Cardiac septum (tissue), 1 donor: ENCODE measurements at regions of chr3 and their contacts with region 1.

Region 1: DNA sequence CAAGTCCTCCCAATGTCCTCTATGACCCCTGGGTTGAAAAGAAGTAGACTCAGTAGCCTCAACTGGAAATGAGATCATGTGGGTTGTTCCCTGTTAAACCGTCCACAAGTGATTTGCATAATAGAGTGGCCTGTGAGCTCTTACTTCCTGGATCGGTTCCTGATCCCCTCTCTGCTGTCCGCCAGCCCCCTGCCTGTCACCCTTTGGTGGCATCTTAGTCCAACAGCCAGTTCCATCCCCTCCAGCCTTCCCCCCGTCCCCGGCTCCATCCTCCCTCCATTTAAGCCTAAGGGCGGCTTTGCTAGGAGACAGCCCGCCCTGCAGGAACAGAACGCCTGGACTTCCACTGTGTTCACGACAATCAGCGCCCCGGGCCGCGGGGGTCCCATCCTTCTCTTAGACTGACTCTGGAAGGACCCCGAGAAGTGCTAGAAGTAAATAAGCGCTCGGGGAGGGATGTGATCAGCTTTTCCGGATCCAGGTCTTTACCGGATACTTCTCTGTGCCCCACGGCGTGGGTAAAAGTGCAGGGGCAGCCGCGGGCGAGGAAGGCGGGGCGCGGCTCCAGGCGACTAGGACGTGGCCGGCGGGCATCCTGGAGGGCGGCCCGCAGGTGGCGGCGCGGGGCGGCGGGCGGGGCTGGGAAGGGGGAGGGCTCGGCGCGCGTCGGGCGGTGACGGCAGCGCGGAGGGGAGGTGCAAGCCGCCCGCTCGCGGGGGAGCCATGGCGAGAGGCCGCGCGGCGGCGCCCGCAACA is 51.2 kb upstream of the ULK4 start:
- DNase-seq: peak; percentile 93

Region 2: DNA sequence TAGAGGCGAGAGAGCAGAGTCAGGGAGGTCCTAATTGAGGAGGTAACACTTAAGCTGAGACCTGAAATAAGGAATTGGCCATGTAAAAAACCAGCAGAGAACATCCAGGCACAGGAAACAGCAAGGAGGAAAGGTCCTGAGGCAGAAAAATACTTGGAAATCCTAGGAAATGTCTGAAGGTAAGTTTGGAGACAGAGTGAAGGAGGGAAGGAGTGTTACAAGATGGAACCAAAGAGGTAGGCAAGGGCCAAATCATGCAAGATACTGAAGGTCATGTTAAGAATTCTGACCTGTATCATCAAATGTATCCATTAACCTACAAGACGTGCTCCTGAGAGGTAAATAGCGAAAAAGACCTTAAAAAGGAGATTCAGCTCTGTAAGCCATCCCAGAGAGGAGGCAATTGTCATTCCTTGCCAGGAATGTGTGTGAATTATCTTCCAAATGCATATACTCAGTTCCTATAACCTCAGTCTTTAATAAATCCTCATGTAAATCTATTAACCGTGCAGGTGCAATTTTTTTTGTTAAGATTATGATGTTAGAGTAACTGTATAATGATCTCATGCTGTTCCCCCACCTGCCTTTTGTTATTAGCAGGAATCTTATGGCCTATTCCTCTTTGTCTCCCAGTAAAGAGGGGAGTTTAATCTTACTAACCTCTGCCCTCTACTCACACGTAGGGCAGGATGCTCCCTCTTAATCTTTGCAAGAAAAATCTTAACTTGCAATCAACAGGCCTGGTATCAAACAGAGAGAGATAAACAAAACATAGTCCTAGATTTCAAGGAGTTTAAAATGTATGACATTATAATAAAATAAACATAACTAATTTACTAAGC is 218.1 kb before region 1 on chr3:
- intact Hi-C with region 1: no loop called
- DNase-seq: no peak

Region 3: DNA sequence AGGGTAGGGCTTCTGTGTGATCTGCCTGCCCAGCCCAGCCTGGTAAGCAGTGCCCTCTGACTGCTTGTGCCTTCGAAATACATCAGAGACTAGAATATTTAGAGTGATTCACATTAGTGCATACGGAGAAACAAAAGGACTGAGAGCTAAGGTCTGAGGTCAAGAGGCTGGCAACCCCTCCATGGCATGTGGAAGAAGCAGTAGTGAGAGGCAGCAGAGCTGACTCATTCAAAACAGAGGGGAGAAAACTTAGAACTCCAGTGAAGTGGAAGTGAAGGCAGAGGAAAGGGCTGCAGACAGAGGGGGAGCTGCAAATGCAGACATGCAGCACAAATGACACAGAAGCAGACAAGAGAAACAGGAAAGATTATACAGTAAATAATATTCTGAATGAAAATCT is 112.8 kb before region 1 on chr3:
- intact Hi-C with region 1: loop called (anchors 5 kb)
- DNase-seq: no peak

Region 4: GRCh38 chr3:41961750-41962679 is 51.1 kb before region 1 on chr3 and contains the start of gene ULK4:
- intact Hi-C with region 1: loop called (anchors 1 kb)
- DNase-seq: peak; percentile 99
- total RNA-seq, gene ULK4: 5.1 TPM

Region 5: GRCh38 chr3:42061713-42062408 is 48.7 kb after region 1 on chr3:
- intact Hi-C with region 1: loop called (anchors 2 kb)
- DNase-seq: peak; percentile 92

Region 6: DNA sequence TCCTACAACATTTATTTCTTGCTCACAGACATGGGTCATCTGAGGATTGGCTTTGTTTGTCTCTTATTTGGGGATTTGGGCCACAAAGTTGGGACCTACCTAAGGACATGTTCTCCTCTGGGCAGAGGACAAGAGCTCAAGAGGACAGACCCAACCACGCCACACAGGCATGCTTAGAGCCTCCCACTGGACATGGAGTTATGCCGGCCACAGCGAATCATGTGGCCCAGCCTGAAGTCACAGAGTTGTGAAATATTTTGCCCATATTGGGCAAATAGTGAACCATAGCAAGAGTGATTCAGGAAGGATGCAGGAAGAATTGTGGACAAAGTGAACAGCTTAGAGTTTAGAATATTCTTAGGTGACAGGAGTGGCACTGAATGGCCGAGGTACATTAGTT is 87.9 kb after region 1 on chr3:
- intact Hi-C with region 1: loop called (anchors 2 kb)
- DNase-seq: no peak

Region 7: DNA sequence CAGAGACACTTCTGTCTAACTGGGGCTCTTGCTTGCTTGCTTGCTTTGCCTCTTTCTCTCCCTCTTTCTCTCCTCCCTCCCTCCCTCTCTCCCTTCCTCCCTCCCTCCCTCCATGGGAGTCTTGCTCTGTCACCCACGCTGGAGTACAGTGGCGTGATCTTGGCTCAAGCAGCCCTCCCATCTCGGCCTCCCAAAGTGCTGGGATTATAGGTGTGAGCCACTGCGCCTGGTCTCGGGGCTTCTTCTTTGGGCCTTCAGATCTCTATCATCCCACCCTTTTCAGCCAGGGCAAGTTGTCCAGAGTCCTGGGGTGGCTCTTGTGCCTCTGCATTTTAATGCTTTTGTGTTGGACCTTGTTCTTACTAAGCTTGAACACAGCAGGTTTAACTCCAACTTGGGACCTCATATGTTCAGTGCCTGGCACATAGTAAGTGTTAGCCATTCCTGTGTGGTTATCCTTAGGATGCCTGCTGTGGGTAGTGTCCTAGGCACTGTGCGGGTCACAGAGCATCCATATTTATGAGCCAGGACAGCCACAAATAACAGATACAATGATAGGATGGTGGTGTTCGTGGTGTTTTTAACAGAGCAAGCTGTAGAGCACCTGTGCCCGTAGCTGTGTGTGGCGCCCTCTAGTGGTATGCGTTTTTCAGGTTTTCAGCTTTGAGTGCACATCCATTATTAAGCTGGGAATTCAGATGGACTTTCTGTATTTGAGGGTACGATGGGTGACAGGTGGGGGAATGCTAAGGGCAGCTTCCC is 177.8 kb after region 1 on chr3:
- intact Hi-C with region 1: loop called (anchors 5 kb)
- DNase-seq: peak; percentile 75